ENCODE measurements at regions of chr9 and their contacts with region 1.

Region 1: DNA sequence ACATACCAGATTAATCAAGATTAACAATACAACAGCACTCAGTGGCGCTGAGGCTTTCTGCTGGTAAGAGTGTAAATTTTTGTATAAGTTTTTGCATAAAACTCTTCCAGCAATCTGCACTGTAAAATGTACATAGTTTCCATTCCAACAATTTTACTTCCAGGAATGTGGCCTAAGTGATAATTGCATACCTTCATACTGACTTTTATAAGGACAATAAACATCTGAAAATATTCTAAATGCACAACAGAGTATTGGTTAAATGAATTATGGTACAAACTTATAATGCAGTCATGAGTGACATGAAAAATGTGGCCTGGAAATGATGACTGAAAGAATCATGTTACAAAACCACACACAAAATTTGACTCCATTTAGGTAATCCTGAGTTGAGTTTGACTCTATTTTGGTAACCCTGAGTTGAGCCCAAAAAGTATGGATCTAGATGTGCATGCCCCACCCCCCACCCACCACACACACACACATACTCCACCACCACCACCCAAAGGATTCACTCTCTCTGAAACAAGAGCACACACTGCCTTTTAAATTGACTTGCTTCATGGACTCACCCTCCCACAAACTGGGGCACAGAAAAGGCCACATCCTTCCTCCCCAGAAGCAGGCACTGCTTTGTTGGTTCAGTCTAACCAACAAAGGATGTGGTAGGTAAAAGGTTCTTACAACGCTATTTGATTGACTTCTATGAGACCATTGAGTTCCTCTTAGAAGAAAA is 137.6 kb downstream of the SUSD1 start:
- DNase-seq: peak; percentile 86
- H3K4me3 Mint-ChIP-seq: peak overlapping the region; percentile 37
- H3K27ac Mint-ChIP-seq: peak overlapping the region; percentile 81
- H3K4me1 Mint-ChIP-seq: peaks cover 49% of the 10 kb centered on the region
- H3K27me3 Mint-ChIP-seq: peaks cover 18% of the 10 kb centered on the region

Region 2: GRCh38 chr9:111957856-111958652 is 79.4 kb before region 1 on chr9:
- CTCF ChIA-PET with region 1: no interaction called
- POLR2A ChIA-PET with region 1: no interaction called
- intact Hi-C with region 1: loop called (anchors 2 kb)
- DNase-seq: no peak
- H3K4me3 Mint-ChIP-seq: no peak overlapping the region
- H3K27ac Mint-ChIP-seq: no peak overlapping the region
- H3K4me1 Mint-ChIP-seq: peaks cover 14% of the 10 kb centered on the region
- H3K27me3 Mint-ChIP-seq: peaks cover 6% of the 10 kb centered on the region

Region 3: DNA sequence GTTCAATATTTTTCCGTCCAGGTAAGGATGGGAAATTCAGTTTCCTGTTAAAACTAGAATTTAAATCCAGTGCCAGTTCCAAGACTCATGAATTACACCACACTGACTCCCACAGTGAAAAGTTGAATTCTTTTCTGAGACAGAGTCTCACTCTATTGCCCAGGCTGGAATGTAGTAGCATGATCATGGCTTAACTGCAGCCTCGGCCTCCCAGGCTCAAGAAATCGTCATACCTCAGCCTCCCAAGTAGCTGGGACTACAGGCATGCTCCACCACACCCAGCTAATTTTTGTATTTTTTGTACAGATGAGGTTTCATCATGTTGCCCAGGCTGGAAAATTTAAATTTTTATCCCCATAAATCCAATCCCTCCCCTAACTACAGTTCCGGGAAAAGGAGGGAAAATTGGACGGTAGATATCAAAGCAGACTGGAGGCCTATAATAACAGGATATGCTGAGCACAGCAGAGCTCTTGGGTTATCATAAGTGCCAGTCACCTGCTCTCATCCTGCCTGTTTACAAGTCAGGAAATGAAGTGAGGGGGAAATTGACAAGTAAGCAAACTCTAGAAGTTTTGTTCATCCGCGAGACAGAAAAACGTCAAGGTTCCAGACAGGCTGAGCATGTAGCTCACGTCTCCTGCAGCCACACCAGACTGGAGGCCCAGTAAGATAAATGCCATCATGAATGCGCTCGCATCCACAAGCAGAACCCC is 35.2 kb before region 1 on chr9:
- CTCF ChIA-PET with region 1: no interaction called
- POLR2A ChIA-PET with region 1: no interaction called
- intact Hi-C with region 1: loop called (anchors 2 kb)
- DNase-seq: no peak
- H3K4me3 Mint-ChIP-seq: no peak overlapping the region
- H3K27ac Mint-ChIP-seq: peak overlapping the region; percentile 53
- H3K4me1 Mint-ChIP-seq: peaks cover 34% of the 10 kb centered on the region
- H3K27me3 Mint-ChIP-seq: peaks cover 3% of the 10 kb centered on the region

Region 4: DNA sequence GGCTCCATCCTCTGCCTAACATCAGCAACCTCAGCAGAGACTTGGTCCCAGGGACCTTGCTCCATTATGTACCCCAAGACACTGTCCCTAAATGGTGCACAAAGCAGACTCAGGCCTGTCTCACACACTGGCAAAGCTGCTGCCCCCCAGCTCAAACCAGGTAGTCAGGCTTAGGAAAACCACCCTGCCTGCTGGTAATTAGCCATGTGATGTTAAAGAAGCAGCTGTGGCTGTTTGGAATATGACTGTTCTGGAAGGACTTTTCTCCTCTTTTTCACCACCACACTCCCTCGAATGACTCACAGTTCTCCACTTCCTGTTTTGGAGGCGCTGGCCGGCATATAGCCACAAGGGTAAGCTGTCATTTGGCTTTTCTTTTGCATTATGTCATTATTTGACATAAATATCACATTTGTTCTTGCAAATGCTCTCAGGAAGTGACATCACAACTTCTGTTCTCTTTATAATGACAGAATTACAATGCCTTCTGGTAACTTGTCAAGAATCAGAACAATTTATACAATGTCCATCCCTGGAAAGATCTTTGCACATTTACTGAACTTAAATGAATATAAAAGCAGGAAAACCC is 23.8 kb after region 1 on chr9:
- CTCF ChIA-PET with region 1: no interaction called
- POLR2A ChIA-PET with region 1: no interaction called
- intact Hi-C with region 1: loop called (anchors 1 kb)
- DNase-seq: peak; percentile 71
- H3K4me3 Mint-ChIP-seq: no peak overlapping the region
- H3K27ac Mint-ChIP-seq: no peak overlapping the region
- H3K4me1 Mint-ChIP-seq: peaks cover 20% of the 10 kb centered on the region
- H3K27me3 Mint-ChIP-seq: no peaks in the 10 kb centered on the region

Region 5: DNA sequence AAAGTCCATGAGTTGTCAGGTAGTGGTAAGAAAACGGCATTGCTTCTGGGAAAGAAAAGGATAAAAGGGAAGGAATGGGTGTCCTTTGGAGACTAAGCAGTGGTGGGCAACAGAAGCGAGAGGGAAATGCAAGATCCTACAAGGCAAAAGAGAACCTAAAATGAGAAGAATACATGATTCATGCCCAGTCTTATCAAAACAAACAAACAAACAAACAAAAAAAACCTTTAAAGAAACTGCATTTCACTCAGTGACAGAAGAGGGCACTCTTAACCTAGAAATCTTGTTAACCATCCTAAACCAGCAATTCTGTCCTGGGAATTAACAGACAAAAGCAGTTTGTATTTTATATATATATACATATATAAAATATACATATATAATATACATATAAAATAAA is 49.2 kb after region 1 on chr9:
- CTCF ChIA-PET with region 1: no interaction called
- POLR2A ChIA-PET with region 1: no interaction called
- intact Hi-C with region 1: no loop called
- DNase-seq: no peak
- H3K4me3 Mint-ChIP-seq: no peak overlapping the region
- H3K27ac Mint-ChIP-seq: no peak overlapping the region
- H3K4me1 Mint-ChIP-seq: no peaks in the 10 kb centered on the region
- H3K27me3 Mint-ChIP-seq: no peaks in the 10 kb centered on the region

Region 6: GRCh38 chr9:113410207-113410864 is 1372.9 kb after region 1 on chr9 and contains the starts of genes C9orf43 and POLE3:
- CTCF ChIA-PET with region 1: no interaction called
- POLR2A ChIA-PET with region 1: no interaction called
- intact Hi-C with region 1: loop called (anchors 2 kb)
- DNase-seq: peak; percentile 97
- H3K4me3 Mint-ChIP-seq: peak within 1 kb of the TSS; percentile 98
- H3K27ac Mint-ChIP-seq: peak within 1 kb of the TSS; percentile 100
- H3K4me1 Mint-ChIP-seq: peaks cover 36% of the 10 kb centered on the region
- H3K27me3 Mint-ChIP-seq: no peaks in the 10 kb centered on the region
- total RNA-seq, gene C9orf43: 0.65 to 0.81 TPM
- total RNA-seq, gene POLE3: 44.3 to 45.0 TPM

Measured in activated CD4-positive, alpha-beta memory T cell treated with anti-CD3 and anti-CD28 coated beads for 36 hours (primary cell).